ENCODE measurements at regions of chr4 and their contacts with region 1.

Region 1: GRCh38 chr4:146916479-146917076 is 29.1 kb downstream of the TTC29 start:
- DNase-seq: no peak
- H3K4me3 Mint-ChIP-seq: no peak overlapping the region
- H3K27ac Mint-ChIP-seq: no peak overlapping the region
- H3K4me1 Mint-ChIP-seq: no peaks in the 10 kb centered on the region
- H3K27me3 Mint-ChIP-seq: peaks cover 4% of the 10 kb centered on the region

Region 2: GRCh38 chr4:145956288-145956890 is 960.2 kb before region 1 on chr4:
- CTCF ChIA-PET with region 1: interaction called, 3 read pairs
- POLR2A ChIA-PET with region 1: no interaction called
- intact Hi-C with region 1: loop called (anchors 5 kb)
- DNase-seq: peak; percentile 17
- H3K4me3 Mint-ChIP-seq: no peak overlapping the region
- H3K27ac Mint-ChIP-seq: no peak overlapping the region
- H3K4me1 Mint-ChIP-seq: peaks cover 4% of the 10 kb centered on the region
- H3K27me3 Mint-ChIP-seq: peaks cover 9% of the 10 kb centered on the region

Region 3: DNA sequence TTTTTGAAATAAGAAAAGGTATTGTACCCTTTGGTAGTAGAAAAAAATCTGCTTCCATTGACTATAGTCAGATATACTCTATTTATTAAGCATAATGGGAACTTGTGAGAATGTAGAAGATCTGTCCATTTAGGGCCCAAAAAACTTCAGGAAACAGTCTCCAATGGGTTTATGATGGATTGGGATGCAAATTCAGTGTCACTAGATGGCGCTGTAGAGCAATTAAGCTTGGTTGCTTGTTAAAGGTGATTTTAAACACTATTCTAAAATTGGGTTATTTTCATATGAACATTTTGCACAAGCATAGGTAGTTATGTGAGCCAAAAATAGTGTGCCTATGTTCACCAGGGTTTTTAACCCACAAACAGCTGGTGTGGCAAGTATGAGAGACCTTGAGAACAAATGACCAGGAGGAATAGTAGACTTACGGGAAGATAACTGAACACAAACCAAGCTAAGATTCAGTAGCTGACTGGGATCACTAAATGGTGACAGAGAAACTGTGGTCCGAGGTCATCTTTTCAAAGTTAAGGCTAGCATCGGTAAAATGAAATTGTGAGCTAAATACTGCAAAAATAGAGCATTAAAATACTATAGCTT is 821.4 kb before region 1 on chr4:
- CTCF ChIA-PET with region 1: no interaction called
- POLR2A ChIA-PET with region 1: no interaction called
- intact Hi-C with region 1: loop called (anchors 10 kb)
- DNase-seq: peak; percentile 12
- H3K4me3 Mint-ChIP-seq: no peak overlapping the region
- H3K27ac Mint-ChIP-seq: no peak overlapping the region
- H3K4me1 Mint-ChIP-seq: no peaks in the 10 kb centered on the region
- H3K27me3 Mint-ChIP-seq: peaks cover 7% of the 10 kb centered on the region

Region 4: GRCh38 chr4:146342600-146343192 is 573.9 kb before region 1 on chr4:
- CTCF ChIA-PET with region 1: interaction called, 5 read pairs
- POLR2A ChIA-PET with region 1: no interaction called
- intact Hi-C with region 1: loop called (anchors 1 kb)
- DNase-seq: peak; percentile 27
- H3K4me3 Mint-ChIP-seq: no peak overlapping the region
- H3K27ac Mint-ChIP-seq: no peak overlapping the region
- H3K4me1 Mint-ChIP-seq: peaks cover 3% of the 10 kb centered on the region
- H3K27me3 Mint-ChIP-seq: no peaks in the 10 kb centered on the region

Region 5: DNA sequence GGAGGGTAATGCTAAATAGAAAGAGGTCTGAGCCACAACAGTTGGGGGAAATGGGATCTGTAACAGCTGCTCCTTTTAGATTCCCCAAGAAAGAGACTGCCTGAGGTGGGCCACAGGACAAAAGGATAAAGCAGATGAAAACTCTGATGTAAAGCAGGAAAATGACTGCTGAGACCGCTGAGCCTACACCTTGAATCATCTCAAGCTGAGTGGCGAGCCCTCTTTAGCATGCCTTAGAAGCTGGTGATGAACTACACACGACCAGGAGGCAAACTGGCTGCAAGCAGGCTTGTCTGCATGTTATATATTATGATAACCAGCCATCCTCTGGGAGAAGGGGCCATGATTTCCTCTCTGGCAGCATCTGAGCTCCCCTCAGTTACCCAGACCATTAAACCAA is 59.3 kb before region 1 on chr4:
- CTCF ChIA-PET with region 1: no interaction called
- POLR2A ChIA-PET with region 1: no interaction called
- intact Hi-C with region 1: no loop called
- DNase-seq: no peak
- H3K4me3 Mint-ChIP-seq: no peak overlapping the region
- H3K27ac Mint-ChIP-seq: no peak overlapping the region
- H3K4me1 Mint-ChIP-seq: no peaks in the 10 kb centered on the region
- H3K27me3 Mint-ChIP-seq: peaks cover 12% of the 10 kb centered on the region